ENCODE measurements at regions of chr20 and their contacts with region 1.

Region 1: DNA sequence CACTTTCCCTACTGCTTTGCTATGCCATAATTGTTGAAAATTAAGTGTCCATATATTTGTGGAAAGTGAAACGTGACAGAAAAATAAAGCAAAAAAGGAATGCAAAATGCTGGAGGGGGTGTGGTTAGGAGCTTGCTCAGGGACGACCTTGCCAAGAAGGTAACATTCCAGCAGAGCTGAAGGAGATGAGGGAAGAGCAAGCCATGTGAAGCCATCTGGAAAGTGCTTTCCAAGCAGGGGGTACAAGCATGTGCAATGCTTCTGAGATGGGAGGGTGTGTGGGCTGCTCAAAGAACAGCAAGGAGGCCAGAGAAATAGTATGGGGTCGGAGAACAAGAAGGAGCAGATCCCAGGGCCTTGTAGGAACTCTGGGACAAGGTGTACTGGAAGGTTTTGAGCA is 161.7 kb downstream of the ISM1 start:
- DNase-seq: no peak
- H3K4me3 ChIP-seq: no peak overlapping the region
- H3K27ac ChIP-seq: no peak overlapping the region
- H3K4me1 ChIP-seq: no peaks in the 10 kb centered on the region
- H3K27me3 ChIP-seq: no peaks in the 10 kb centered on the region
- CTCF ChIP-seq: no peak
- EP300 ChIP-seq: no peak
- POLR2A ChIP-seq: no peak

Region 2: GRCh38 chr20:13338999-13339411 is 43.8 kb before region 1 on chr20:
- intact Hi-C with region 1: loop called in 1 of 4 experiments (anchors 1 kb)
- DNase-seq: no peak
- H3K4me3 ChIP-seq: no peak overlapping the region
- H3K27ac ChIP-seq: no peak overlapping the region
- H3K4me1 ChIP-seq: no peaks in the 10 kb centered on the region
- H3K27me3 ChIP-seq: no peaks in the 10 kb centered on the region
- CTCF ChIP-seq: no peak
- EP300 ChIP-seq: no peak
- POLR2A ChIP-seq: no peak

Measured in ovary (tissue), 10 donors.